ENCODE measurements at regions of chr17 and their contacts with region 1.

Region 1: GRCh38 chr17:81601525-81602120 is 35.3 kb downstream of the NPLOC4 start:
- DNase-seq: no peak
- ATAC-seq: peak; percentile 35 to 85 (median 84)
- H3K4me3 ChIP-seq: no peak overlapping the region
- H3K27ac ChIP-seq: no peak overlapping the region
- H3K4me1 ChIP-seq: peaks cover 0 to 21% (median 8%) of the 10 kb centered on the region in 12 donors
- H3K27me3 ChIP-seq: no peaks in the 10 kb centered on the region
- CTCF ChIP-seq: peak; percentile 75 to 90 (median 84)
- POLR2A ChIP-seq: no peak

Region 2: DNA sequence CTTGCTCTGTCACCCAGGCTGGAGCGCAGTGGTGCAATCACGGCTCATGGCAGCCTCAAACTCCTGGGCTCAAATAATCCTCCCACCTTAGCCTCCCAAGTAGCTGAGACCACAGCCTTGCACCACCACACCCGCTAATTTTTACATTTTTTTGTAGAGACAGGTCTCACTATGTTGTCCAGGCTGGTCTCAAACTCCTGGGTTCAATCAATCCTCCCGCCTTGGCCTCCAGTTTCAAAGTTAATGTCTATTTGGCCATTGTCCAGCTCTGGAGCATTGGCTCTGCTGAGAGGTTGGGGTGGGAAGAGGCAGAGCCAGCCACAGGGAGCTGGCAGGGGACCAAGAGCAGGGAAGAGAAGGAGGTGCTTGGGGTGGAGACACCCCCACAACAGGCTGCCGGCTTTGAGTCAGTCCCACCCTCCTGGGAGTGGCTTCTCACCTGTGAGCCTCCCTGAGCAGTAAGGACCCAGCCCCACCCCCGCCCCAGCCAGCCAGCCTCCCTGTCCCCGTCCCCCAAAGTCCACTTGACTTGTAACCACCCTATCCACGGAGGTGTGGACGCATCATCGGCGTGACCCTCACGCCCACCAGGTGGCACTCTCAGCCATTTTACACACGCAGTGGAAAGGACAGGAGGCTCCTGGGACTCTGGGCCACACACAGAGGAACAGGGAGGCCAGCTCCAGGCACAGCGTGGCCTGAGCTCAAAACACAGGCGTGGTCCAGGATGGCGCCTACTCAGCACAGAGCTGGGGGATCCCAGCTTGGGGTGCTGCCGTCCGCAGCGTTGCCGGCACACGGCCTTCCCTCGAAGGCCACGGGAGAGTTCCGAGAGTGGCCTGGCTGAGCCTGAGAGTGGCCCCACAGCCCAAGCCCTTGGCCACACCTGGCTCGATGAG is 459.1 kb before region 1 on chr17:
- intact Hi-C with region 1: loop called in 1 of 10 experiments (anchors 5 kb)
- DNase-seq: peak; percentile 71 to 88 (median 81)
- ATAC-seq: peak; percentile 90 to 97 (median 94)
- H3K4me3 ChIP-seq: no peak overlapping the region
- H3K27ac ChIP-seq: no peak overlapping the region
- H3K4me1 ChIP-seq: peaks cover 0 to 9% (median 4%) of the 10 kb centered on the region in 12 donors
- H3K27me3 ChIP-seq: no peaks in the 10 kb centered on the region
- CTCF ChIP-seq: peak; percentile 57 to 82 (median 70)
- POLR2A ChIP-seq: no peak

Region 3: GRCh38 chr17:81253358-81254131 is 348.1 kb before region 1 on chr17:
- intact Hi-C with region 1: loop called (anchors 2 to 10 kb)
- DNase-seq: peak in 1 of 5 donors; percentile 52
- ATAC-seq: peak in 3 of 4 donors; percentile 33 to 45 (median 35)
- H3K4me3 ChIP-seq: no peak overlapping the region
- H3K27ac ChIP-seq: no peak overlapping the region
- H3K4me1 ChIP-seq: peaks cover 3 to 19% (median 13%) of the 10 kb centered on the region in 12 donors
- H3K27me3 ChIP-seq: no peaks in the 10 kb centered on the region
- CTCF ChIP-seq: peak; percentile 66 to 88 (median 81)
- POLR2A ChIP-seq: no peak

Region 4: DNA sequence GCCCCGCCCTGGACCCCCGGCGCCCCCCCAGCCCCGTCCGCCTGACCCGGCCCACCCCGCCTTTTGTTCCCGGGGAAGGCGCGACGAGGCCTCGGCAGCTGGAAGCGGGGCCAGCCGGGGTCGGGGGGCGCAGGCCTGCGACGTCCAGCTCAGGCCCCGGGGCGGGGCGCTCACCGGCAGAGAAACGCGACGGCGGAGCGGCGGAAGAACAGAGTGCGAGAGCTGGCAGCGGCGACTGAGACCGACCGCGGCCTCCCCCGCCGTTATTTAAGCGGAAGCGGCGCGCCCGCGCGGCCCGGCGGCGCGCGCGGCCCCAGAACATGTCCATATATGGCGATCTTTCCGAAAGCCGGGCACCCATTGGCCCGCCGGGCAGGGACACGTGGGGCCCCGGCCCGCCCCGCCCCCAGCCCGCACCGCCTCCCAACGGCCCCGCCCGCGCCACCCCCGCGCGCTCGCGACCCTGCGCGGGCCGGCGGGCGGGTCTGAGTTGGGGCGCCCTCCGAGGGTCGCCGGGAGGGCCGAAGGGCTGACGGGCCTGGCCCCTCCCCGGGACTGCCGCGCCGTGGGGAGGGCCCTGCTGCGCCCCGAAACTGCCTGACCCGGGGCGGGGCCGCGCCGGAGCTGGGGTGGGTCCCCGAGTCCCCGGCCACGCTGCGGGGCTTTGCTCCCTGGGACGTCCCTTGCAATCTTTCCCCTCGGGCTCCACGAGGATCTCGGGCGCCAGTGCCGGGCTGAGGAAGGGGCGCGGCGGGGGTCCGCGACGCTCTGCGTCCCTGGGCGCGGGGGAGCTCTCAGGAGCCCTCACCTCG is 88.9 kb before region 1 on chr17 and contains the start of gene ACTG1:
- intact Hi-C with region 1: loop called in 1 of 10 experiments (anchors 10 kb)
- DNase-seq: peak; percentile 94 to 96 (median 95)
- ATAC-seq: peak; percentile 61 to 77 (median 66)
- H3K4me3 ChIP-seq: peak within 1 kb of the TSS; percentile 81 to 99 (median 94)
- H3K27ac ChIP-seq: peak within 1 kb of the TSS; percentile 96 to 100 (median 100)
- H3K4me1 ChIP-seq: peaks cover 6 to 58% (median 39%) of the 10 kb centered on the region in 12 donors
- H3K27me3 ChIP-seq: no peaks in the 10 kb centered on the region
- CTCF ChIP-seq: no peak
- POLR2A ChIP-seq: peak; percentile 83 to 94
- total RNA-seq, gene ACTG1: 335 to 1,653 (median 423) TPM

Region 5: DNA sequence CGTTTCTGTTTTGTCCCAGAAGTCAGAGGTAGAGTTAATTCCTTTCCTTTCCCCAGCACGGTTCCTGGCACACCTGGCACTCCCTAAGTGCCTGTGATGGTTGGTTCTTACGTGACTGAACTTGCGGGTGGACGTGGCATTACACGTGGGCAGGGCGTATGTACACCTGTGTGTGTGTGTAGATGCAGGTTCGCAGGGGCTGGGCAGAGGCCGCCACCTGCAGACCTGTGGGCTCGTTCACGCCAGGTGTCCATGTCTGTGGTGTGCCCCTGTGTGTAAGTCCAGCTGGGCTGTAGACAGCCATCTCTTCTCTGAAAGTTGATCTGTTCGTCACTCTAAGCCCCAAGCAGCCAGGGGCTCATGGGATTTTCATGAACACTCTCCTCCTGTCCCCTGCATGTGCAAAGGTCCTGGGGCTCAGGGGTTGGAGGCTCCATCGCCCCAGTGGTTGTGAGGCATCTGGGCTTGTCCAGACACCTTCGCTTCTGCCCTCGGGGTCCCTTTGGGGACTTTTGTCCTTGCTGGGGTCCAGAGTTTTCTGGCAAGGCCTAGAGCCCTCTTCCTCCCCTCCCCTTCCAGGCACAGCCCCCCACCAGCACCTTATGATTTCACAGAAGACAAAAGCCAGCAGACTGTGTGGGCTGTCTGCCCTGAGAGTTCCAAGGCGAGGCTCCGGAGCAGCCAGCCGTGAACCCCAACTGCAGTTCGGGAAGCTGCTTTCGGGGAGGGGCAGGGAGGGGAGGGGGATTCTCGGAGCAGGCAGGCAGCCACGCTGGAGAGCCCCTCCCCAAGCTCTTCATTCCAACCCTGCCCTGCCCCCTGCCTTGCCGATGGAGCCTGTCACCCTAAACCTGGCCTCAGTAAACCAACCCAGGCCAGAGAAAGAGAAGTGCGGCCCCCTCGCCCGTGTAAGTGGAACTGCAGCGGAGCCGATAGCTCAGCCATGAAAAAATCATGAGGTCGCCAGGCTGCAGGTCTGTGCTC is 78.8 kb before region 1 on chr17:
- intact Hi-C with region 1: loop called in 2 of 10 experiments (anchors 5 to 10 kb)
- DNase-seq: peak in 2 of 5 donors; percentile 22 to 46
- ATAC-seq: no peak
- H3K4me3 ChIP-seq: no peak overlapping the region
- H3K27ac ChIP-seq: no peak overlapping the region
- H3K4me1 ChIP-seq: peaks cover 2 to 39% (median 22%) of the 10 kb centered on the region in 12 donors
- H3K27me3 ChIP-seq: peaks cover 4 to 44% (median 13%) of the 10 kb centered on the region in 9 donors
- CTCF ChIP-seq: peak in 2 of 12 donors; percentile 6 to 14
- POLR2A ChIP-seq: no peak

Region 6: DNA sequence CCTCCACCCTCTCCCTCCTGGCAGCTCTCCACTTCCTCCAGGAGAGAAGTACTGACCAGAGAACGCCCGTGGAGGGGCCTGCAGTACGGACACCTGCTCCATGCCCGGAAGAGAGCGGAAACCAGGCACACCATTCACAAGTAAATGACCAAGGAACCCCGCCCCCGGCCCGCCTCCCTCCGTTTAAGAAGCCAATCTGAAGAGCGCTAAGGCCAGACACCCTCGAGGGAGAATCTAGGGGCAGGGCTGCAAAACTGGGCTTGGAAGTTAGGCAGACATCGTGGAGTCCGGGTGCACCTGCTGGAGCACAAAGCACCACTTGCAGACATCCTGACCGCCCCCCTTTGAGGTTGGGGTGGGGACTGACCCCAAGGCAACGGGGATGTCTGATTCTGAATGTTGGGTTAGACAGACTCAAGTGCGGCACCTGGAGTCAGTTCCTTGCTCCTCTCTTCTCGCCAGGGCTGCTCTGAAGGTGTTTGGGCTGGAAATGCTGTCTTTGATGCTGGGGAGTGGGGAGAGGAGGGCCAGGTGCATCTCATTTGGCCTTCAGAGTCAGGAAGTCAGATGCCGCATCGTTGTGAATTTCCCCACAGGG is 48.5 kb before region 1 on chr17:
- intact Hi-C with region 1: loop called in 5 of 10 experiments (anchors 5 kb)
- DNase-seq: peak; percentile 65 to 78 (median 71)
- ATAC-seq: peak; percentile 14 to 62 (median 44)
- H3K4me3 ChIP-seq: peak overlapping the region; percentile 82 to 100 (median 92)
- H3K27ac ChIP-seq: peak overlapping the region; percentile 77 to 95 (median 90)
- H3K4me1 ChIP-seq: peaks cover 0 to 65% (median 39%) of the 10 kb centered on the region in 12 donors
- H3K27me3 ChIP-seq: no peaks in the 10 kb centered on the region
- CTCF ChIP-seq: peak in 1 of 12 donors; percentile 11
- POLR2A ChIP-seq: no peak

Region 7: GRCh38 chr17:81558941-81559806 is 42.4 kb before region 1 on chr17:
- intact Hi-C with region 1: loop called in 6 of 10 experiments (anchors 5 kb)
- DNase-seq: peak in 3 of 5 donors; percentile 57 to 71 (median 62)
- ATAC-seq: peak; percentile 56 to 80 (median 70)
- H3K4me3 ChIP-seq: no peak overlapping the region
- H3K27ac ChIP-seq: peak overlapping the region in 5 of 12 donors; percentile 17 to 79 (median 31)
- H3K4me1 ChIP-seq: peaks cover 0 to 65% (median 21%) of the 10 kb centered on the region in 12 donors
- H3K27me3 ChIP-seq: no peaks in the 10 kb centered on the region
- CTCF ChIP-seq: peak in 10 of 12 donors; percentile 14 to 57 (median 36)
- POLR2A ChIP-seq: no peak

Measured in heart left ventricle (tissue), 16 donors.